ENCODE measurements at regions of chr9 and their contacts with region 1.

Region 1: GRCh38 chr9:137672907-137673791 is 54.3 kb downstream of the EHMT1 start:
- DNase-seq: peak; percentile 8
- H3K4me3 Mint-ChIP-seq: no peak overlapping the region
- H3K27ac Mint-ChIP-seq: no peak overlapping the region
- H3K4me1 Mint-ChIP-seq: peaks cover 13% of the 10 kb centered on the region
- H3K27me3 Mint-ChIP-seq: no peaks in the 10 kb centered on the region

Region 2: DNA sequence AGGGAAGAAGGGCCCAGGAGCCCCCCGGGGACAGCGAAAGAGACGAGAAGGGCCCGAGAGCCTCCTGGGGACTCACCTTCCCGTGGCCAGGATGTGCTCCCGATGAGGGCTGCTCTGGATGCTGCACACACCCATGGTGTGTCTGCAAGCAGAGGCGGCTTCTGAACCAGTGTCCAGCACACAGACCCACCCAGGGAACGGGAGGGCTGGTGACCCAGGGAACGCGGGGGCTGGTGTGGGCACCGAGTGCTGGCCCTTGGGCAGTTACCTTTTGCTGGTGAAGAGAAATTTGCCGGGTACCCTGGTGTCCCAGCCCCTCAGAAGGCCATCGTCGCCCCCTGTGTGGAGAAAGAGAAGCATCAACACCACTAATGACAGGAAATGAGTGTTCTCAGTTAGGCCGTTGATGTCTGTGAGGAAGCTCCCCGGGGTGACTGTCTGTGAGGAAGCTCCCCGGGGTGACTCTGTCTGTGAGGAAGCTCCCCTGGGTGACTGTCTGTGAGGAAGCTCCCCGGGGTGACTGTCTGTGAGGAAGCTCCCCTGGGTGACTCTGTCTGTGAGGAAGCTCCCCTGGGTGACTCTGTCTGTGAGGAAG is 108.2 kb before region 1 on chr9:
- intact Hi-C with region 1: no loop called
- DNase-seq: no peak
- H3K4me3 Mint-ChIP-seq: no peak overlapping the region
- H3K27ac Mint-ChIP-seq: peak overlapping the region; percentile 29
- H3K4me1 Mint-ChIP-seq: no peaks in the 10 kb centered on the region
- H3K27me3 Mint-ChIP-seq: no peaks in the 10 kb centered on the region

Region 3: DNA sequence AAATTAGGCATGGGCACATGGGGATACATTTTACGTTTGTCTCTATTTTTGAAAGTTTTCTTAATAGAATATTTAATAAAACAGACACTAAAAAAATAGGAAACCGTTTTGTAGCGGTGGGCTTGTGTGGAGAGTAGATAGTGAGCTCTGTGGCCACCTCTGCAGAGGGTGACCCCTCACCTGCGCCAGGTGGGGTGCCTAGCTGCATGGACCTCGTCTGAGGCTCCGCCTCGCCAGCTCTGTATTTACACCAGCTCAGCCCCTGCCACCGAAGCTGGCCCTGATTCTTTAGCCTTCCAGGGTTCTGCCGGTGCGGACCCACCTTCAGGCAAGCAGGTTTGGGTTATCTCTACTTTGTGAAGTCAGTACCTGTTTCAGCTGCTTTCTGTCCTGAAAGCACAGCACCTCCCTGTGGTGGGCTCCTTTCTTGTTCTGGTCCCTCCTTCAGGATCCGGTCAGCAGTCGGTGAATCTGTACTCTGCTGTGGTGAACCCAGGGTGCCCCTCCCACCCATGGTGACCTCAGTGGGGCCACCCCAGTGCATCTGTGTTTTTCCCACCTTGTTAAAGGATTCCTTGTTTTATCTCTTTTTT is 99.2 kb after region 1 on chr9:
- intact Hi-C with region 1: loop called (anchors 1 kb)
- DNase-seq: no peak
- H3K4me3 Mint-ChIP-seq: no peak overlapping the region
- H3K27ac Mint-ChIP-seq: no peak overlapping the region
- H3K4me1 Mint-ChIP-seq: no peaks in the 10 kb centered on the region
- H3K27me3 Mint-ChIP-seq: no peaks in the 10 kb centered on the region

Measured in activated T-helper 1 cell treated with anti-CD3 and anti-CD28 coated beads, Interleukin-12 subunit alpha, Interleukin-12 subunit beta, Interleukin-2, Interleukin-4 antibody, amounts not matched to agents 30 ng/mL and 10 ng/mL and 1 ng/mL, durations not matched to agents 14 hours and 24 hours and 36 hours (primary cell).